ENCODE measurements at regions of chr1 and their contacts with region 1.

Region 1: DNA sequence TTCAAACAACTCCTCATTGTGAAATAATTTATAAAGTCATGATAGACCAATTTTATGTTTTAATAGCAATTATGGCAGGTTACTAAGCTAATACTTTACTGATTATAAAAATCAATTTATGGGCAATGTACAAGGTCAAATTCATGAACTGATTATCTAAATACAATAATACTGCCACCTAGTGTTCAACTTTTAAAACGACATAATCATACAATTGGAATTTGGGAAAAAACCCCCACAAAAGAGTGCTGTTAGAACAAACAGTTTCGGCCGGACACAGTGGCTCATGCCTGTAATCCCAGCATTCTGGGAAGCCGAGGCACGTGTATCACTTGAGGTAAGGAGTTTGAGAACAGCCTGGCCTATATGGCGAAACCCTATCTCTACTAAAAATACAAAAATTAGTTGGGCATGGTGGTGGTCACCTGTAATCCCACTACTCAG is 14.0 kb downstream of the GTF2B start:
- DNase-seq: no peak
- H3K4me3 ChIP-seq: no peak overlapping the region
- H3K27ac ChIP-seq: peak overlapping the region in 2 of 4 donors; percentile 36 to 53
- H3K4me1 ChIP-seq: peaks cover 22 to 58% (median 44%) of the 10 kb centered on the region in 4 donors
- H3K27me3 ChIP-seq: no peaks in the 10 kb centered on the region
- CTCF ChIP-seq: peak; percentile 44 to 61 (median 54)
- EP300 ChIP-seq: no peak
- POLR2A ChIP-seq: no peak

Region 2: DNA sequence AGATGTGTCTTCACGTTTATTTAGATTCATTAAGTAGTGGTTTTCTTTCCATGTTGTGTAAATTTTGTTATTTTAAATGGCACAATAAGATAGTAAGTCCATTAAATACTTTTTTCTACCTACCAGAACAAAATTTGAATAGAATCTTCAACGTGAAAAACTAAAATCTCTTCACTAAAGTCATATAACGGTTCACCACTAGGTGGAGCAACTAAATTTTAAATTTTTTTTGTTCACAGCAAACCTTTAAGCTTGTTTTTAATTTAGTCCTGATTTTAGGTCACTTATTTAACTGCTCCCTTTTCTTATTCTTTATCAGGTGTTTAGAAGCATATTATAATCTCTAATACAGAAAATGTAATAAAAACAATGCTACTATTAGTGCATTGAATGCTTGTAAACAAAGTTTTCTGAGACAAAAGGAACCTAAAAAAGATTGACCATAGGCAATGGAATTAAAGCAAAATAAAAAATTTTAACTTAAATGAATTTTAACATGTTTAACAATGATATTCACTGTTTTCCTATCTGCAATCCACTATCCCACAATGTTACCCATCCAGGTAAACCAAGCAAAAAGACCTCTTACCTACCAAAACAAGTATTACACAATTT is 221.6 kb before region 1 on chr1:
- intact Hi-C with region 1: loop called (anchors 5 kb)
- DNase-seq: no peak
- H3K4me3 ChIP-seq: no peak overlapping the region
- H3K27ac ChIP-seq: no peak overlapping the region
- H3K4me1 ChIP-seq: peaks cover 0 to 4% (median 0%) of the 10 kb centered on the region in 4 donors
- H3K27me3 ChIP-seq: no peaks in the 10 kb centered on the region
- CTCF ChIP-seq: peak; percentile 56 to 70 (median 69)
- EP300 ChIP-seq: no peak
- POLR2A ChIP-seq: no peak

Region 3: DNA sequence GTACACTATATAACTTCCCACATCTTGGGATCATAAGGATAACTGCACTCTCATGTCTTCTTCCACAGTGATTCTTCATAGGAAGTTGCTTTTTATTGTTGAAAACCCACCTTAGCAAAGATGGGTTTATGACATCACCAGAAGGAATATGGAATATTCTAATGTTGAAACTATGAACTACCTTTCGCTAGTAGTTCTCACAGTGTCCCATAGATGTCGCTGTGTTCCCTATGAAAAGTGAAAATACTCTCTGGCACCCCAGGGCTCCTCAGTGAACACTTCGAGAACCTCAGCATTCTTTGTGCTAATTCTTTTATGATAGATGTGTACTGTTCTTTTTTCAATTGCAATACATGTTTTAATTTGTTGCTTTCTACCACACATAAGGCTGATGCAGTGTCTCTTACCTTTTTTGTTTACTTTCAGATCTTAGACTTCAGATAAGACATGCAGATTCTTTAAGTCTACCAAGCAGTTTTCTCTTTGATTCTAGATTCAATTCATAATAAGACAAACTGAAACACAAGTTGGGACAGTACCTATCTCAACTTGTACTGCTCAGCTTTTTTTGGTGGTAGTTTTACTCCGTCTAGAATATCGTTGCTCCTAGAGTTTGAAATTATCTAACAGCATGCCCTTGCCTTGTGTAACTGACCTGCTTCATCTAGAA is 76.9 kb before region 1 on chr1:
- intact Hi-C with region 1: loop called (anchors 10 kb)
- DNase-seq: no peak
- H3K4me3 ChIP-seq: no peak overlapping the region
- H3K27ac ChIP-seq: no peak overlapping the region
- H3K4me1 ChIP-seq: no peaks in the 10 kb centered on the region
- H3K27me3 ChIP-seq: no peaks in the 10 kb centered on the region
- CTCF ChIP-seq: peak; percentile 45 to 78 (median 59)
- EP300 ChIP-seq: no peak
- POLR2A ChIP-seq: no peak